Endothelial cell of umbilical vein (primary cell): ENCODE measurements at regions of chr1 and their contacts with region 1.

Region 1: DNA sequence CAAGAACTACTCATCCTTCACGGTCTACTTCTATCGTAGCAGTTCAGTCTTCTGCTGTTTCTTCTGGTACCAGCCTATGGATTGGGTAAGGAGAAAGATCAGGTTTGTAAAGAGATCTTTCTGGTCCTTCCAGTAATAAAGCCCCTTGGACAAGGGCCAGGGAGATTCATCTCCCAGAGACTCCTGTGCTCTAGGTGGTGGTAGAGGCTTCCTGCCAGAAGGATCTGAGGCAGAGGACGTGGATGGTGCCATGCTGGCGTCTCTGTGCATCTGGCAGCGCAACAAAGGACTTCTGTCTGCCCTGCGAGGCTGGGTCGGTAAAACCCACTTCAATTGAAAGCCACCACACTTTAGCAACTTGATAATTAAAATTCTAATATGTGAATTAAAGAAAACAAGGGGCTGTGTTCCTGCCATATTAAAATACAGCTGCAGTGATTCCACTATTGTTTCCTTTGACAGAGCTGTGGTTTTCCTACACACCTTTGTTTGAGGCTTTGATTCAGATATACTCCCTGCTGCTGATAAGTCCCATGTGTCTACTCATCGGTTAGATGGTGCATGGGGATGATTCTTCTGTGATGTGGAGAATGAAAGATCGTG is 73.6 kb downstream of the ROR1 start:
- DNase-seq: no peak
- H3K4me3 ChIP-seq: no peak overlapping the region
- H3K27ac ChIP-seq: no peak overlapping the region
- H3K4me1 ChIP-seq: no peaks in the 10 kb centered on the region
- H3K27me3 ChIP-seq: no peaks in the 10 kb centered on the region
- CTCF ChIP-seq: no peak
- POLR2A ChIP-seq: no peak

Region 2: GRCh38 chr1:63773815-63774616 is 73.4 kb before region 1 on chr1 and contains the start of gene ROR1:
- CTCF ChIA-PET with region 1: no interaction called
- POLR2A ChIA-PET with region 1: no interaction called
- dilution Hi-C with region 1: no loop called
- intact Hi-C with region 1: no loop called
- DNase-seq: peak; percentile 86
- H3K4me3 ChIP-seq: peak within 1 kb of the TSS; percentile 62 to 73 (median 72)
- H3K27ac ChIP-seq: peak within 1 kb of the TSS; percentile 40
- H3K4me1 ChIP-seq: peaks cover 15% of the 10 kb centered on the region
- H3K27me3 ChIP-seq: peaks cover 0 to 5% of the 10 kb centered on the region in 2 experiments
- CTCF ChIP-seq: peak; percentile 42 to 80
- POLR2A ChIP-seq: no peak
- total RNA-seq, gene ROR1: 3.5 and 10.9 TPM in 2 replicates

Region 3: DNA sequence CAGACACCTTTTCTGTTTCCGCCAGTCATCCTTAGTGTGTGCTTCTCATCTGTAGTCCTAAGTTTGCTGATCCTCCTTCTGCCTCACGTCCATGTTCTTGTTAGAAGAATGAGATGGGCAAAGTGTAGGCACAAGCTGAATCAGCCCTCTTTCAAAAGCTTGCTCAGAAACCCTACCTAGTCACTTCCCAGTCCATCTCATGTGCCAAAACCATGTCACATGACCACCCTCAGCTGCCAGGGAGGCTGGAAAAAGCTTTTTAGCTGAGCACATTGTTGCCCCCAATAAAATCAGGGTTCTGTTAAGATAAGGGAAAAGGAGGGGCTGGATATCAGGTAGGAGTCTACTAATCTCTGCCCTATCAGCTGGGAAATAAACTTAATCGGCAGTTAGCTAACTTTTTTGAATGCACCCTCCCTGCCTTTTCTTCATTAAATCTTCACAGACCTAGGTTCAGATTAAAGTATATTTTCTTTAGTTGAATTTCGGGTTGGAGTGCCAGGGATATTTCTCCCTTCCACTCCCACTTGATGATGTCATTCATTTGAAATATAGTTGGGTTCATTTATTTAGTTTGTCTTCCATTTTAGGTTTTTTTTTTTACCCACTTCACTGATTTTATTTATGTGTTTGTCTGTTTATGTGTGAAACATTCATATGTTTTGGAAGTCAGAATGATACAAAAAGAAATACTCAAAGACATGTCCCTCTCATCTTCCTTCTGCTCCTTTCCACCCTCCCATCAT is 55.6 kb after region 1 on chr1:
- CTCF ChIA-PET with region 1: no interaction called
- POLR2A ChIA-PET with region 1: no interaction called
- dilution Hi-C with region 1: no loop called
- intact Hi-C with region 1: loop called (anchors 10 kb)
- DNase-seq: no peak
- H3K4me3 ChIP-seq: no peak overlapping the region
- H3K27ac ChIP-seq: no peak overlapping the region
- H3K4me1 ChIP-seq: peaks cover 4% of the 10 kb centered on the region
- H3K27me3 ChIP-seq: no peaks in the 10 kb centered on the region
- CTCF ChIP-seq: no peak
- POLR2A ChIP-seq: no peak